ENCODE measurements at regions of chr17 and their contacts with region 1.

Region 1: DNA sequence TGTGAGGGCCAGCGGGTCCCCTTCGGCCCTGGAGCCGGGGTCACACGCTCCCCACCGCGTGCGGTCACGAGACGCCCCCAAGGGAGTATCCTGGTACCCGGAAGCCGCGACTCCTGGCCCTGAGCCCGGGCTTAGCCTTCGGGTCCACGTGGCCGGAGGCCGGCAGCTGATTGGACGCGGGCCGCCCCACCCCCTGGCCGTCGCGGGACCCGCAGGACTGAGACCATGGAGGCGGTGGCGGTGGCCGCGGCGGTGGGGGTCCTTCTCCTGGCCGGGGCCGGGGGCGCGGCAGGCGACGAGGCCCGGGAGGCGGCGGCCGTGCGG is at the start of gene NAGLU:
- DNase-seq: peak; percentile 83 to 97
- H3K4me3 ChIP-seq: peak within 1 kb of the TSS; percentile 72 to 79
- H3K27ac ChIP-seq: peak within 1 kb of the TSS; percentile 89 to 90
- H3K4me1 ChIP-seq: peaks cover 14 to 23% of the 10 kb centered on the region in 2 donors
- H3K27me3 ChIP-seq: no peaks in the 10 kb centered on the region
- CTCF ChIP-seq: no peak
- total RNA-seq, gene NAGLU: 94.7 TPM

Region 2: GRCh38 chr17:42484304-42484703 is 51.7 kb before region 1 on chr17:
- intact Hi-C with region 1: no loop called
- DNase-seq: no peak
- H3K4me3 ChIP-seq: no peak overlapping the region
- H3K27ac ChIP-seq: no peak overlapping the region
- H3K4me1 ChIP-seq: no peaks in the 10 kb centered on the region
- H3K27me3 ChIP-seq: no peaks in the 10 kb centered on the region
- CTCF ChIP-seq: no peak

Region 3: DNA sequence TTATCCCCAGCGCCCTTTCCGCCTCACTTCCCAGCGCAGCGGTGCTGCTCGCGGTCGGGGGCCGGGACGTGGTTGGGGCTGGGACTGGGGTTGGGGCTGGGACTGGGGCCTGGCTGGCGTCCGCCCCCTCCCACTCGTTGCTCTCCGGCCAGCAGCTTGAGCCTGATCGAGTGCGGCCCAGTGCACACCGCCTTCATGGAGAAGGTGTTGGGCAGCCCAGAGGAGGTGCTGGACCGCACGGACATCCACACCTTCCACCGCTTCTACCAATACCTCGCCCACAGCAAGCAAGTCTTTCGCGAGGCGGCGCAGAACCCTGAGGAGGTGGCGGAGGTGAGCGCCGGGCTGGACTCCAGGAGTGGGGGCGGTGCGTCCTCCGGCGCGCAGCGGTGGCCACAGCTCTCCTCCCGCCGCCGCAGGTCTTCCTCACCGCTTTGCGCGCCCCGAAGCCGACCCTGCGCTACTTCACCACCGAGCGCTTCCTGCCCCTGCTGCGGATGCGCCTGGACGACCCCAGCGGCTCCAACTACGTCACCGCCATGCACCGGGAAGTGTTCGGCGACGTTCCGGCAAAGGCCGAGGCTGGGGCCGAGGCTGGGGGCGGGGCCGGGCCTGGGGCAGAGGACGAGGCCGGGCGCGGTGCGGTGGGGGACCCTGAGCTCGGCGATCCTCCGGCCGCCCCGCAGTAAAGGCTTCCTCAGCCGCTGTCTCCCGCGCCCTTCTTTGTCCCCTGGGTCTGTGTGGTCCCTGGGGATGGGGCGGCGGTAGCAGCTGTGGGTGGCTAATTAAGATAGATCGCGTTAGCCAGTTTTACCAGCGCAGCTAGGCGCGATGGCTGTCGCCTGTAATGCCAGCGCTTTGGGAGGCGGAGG is 18.5 kb after region 1 on chr17:
- intact Hi-C with region 1: loop called (anchors 2 kb)
- DNase-seq: peak in 1 of 2 donors; percentile 93
- H3K4me3 ChIP-seq: peak overlapping the region; percentile 82 to 83
- H3K27ac ChIP-seq: peak overlapping the region; percentile 82 to 91
- H3K4me1 ChIP-seq: peaks cover 0 to 19% of the 10 kb centered on the region in 2 donors
- H3K27me3 ChIP-seq: no peaks in the 10 kb centered on the region
- CTCF ChIP-seq: no peak

Region 4: GRCh38 chr17:42566883-42567573 is 31.0 kb after region 1 on chr17 and contains the start of gene MLX:
- intact Hi-C with region 1: loop called (anchors 1 kb)
- DNase-seq: peak; percentile 71 to 97
- H3K4me3 ChIP-seq: peak within 1 kb of the TSS; percentile 70 to 82
- H3K27ac ChIP-seq: peak within 1 kb of the TSS; percentile 89 to 97
- H3K4me1 ChIP-seq: peaks cover 5 to 31% of the 10 kb centered on the region in 2 donors
- H3K27me3 ChIP-seq: no peaks in the 10 kb centered on the region
- CTCF ChIP-seq: no peak
- total RNA-seq, gene MLX: 15.8 TPM

Measured in ascending aorta (tissue), 2 donors.